Left cardiac atrium (tissue), 4 donors: ENCODE measurements at regions of chr4 and their contacts with region 1.

Region 1: GRCh38 chr4:143207557-143207956 is 22.8 kb downstream of the USP38 start:
- DNase-seq: no peak
- ATAC-seq: peak; percentile 50 to 62

Region 2: DNA sequence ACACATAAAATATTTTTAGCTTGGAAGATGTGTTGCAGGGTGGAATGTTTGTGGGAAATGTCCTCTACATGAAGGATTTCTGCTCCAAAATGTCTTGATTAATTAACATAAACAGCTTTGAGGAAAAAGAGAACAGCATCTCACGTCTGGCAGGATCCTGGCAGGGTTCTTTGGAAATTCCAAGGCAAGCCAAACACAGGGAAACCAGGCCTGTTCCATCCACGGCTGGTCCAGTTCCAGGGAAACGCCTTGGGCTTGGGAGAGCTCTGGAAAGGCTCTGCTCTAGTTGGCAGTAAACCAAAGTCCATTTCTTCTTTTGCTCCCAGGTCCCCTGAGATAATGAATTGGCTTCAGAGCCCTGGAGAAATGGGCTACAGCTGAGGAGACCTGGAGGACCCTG is 86.8 kb after region 1 on chr4:
- intact Hi-C with region 1: no loop called
- DNase-seq: peak; percentile 88
- ATAC-seq: peak; percentile 95 to 96

Region 3: DNA sequence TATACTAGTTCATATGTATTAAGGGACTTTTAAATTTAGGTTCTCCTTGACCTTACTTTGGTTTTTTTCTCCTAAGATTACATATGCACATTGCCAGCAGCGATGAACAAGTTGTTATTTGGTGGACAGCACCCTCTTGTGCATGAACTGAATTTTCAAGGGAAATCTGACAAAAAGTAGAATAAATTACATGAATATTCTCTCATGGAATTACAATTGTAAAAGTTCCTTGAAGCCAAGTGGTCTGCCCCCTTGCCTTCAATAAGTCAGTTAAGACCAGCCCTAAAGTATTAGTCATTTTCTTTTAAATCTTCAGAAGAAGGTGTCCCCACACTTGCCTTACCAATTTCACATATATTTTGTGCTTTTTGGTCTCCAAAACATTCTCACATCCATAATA is 275.3 kb after region 1 on chr4:
- intact Hi-C with region 1: loop called (anchors 5 kb)
- DNase-seq: no peak
- ATAC-seq: peak; percentile 55 to 57